CD8-positive, alpha-beta T cell (primary cell): ENCODE measurements at regions of chr7 and their contacts with region 1.

Region 1: GRCh38 chr7:90119178-90119971 is 34.9 kb upstream of the STEAP1 start:
- DNase-seq: peak in 8 of 9 experiments; percentile 5 to 55 (median 24)
- ATAC-seq: no peak
- H3K4me3 ChIP-seq: peak overlapping the region; percentile 3 to 35
- H3K4me3 Mint-ChIP-seq: peak overlapping the region; percentile 71
- H3K27ac ChIP-seq: no peak overlapping the region
- H3K27ac Mint-ChIP-seq: no peak overlapping the region
- H3K4me1 ChIP-seq: no peaks in the 10 kb centered on the region
- H3K4me1 Mint-ChIP-seq: peaks cover 10% of the 10 kb centered on the region
- H3K27me3 ChIP-seq: peaks cover 0 to 3% of the 10 kb centered on the region in 2 experiments
- H3K27me3 Mint-ChIP-seq: peaks cover 23% of the 10 kb centered on the region
- CTCF ChIP-seq: no peak

Region 2: GRCh38 chr7:88789480-88790064 is 1329.8 kb before region 1 on chr7:
- CTCF ChIA-PET with region 1: no interaction called
- POLR2A ChIA-PET with region 1: no interaction called
- intact Hi-C with region 1: loop called in 1 of 2 experiments (anchors 10 kb)
- DNase-seq: peak in 2 of 9 experiments; percentile 6 to 26
- ATAC-seq: no peak
- H3K4me3 ChIP-seq: no peak overlapping the region
- H3K4me3 Mint-ChIP-seq: no peak overlapping the region
- H3K27ac ChIP-seq: no peak overlapping the region
- H3K27ac Mint-ChIP-seq: no peak overlapping the region
- H3K4me1 ChIP-seq: no peaks in the 10 kb centered on the region
- H3K4me1 Mint-ChIP-seq: no peaks in the 10 kb centered on the region
- H3K27me3 ChIP-seq: no peaks in the 10 kb centered on the region
- H3K27me3 Mint-ChIP-seq: no peaks in the 10 kb centered on the region
- CTCF ChIP-seq: peak; percentile 69

Region 3: DNA sequence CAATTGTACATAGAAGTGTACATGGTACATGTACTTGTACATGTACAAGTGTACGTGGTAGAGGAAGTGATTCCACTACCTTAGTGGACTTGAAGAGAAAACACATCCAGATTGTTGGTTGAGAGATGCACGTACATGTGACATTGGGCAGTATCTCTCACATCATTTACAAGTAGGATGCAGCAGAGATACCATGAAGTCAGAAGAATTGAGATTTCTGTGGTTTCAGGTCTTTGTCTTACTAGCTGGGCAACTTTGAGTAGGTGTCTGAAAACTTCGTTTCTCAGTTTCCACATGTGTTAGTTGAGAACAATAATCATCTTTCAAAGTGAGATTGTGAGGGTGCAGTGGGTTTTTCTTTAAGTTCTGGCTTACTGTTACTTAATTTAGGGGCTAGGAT is 305.3 kb after region 1 on chr7:
- CTCF ChIA-PET with region 1: no interaction called
- POLR2A ChIA-PET with region 1: no interaction called
- intact Hi-C with region 1: no loop called
- DNase-seq: no peak
- ATAC-seq: no peak
- H3K4me3 ChIP-seq: no peak overlapping the region
- H3K4me3 Mint-ChIP-seq: no peak overlapping the region
- H3K27ac ChIP-seq: no peak overlapping the region
- H3K27ac Mint-ChIP-seq: no peak overlapping the region
- H3K4me1 ChIP-seq: no peaks in the 10 kb centered on the region
- H3K4me1 Mint-ChIP-seq: no peaks in the 10 kb centered on the region
- H3K27me3 ChIP-seq: no peaks in the 10 kb centered on the region
- H3K27me3 Mint-ChIP-seq: peaks cover 2% of the 10 kb centered on the region
- CTCF ChIP-seq: no peak